Aorta (tissue), 5 donors: ENCODE measurements at regions of chr10 and their contacts with region 1.

Region 1: GRCh38 chr10:32256613-32257437 is 90.1 kb downstream of the EPC1 start:
- DNase-seq: no peak
- ATAC-seq: peak; percentile 84
- H3K4me3 ChIP-seq: no peak overlapping the region
- H3K27ac ChIP-seq: no peak overlapping the region
- H3K4me1 ChIP-seq: no peaks in the 10 kb centered on the region
- H3K27me3 ChIP-seq: no peaks in the 10 kb centered on the region

Region 2: DNA sequence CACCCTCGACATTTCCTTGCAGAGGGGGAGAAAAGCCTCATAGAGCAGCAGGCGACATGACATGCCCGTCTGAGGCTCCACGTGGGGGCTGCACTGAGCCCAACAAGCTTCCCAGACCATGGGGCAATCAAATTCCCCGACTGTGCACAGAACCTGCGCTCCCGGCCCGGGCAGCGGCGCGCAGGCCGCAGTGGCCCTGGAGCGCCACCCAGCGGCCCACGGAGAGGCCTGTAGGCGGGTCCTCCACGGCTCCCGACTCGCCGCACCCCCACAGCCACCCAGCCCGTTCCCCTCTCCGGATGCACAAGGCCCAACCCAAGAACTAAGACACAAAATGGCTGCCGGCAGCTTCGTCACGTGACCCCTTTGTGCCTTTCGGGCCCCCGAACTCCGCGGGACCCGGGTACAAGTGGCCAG is 89.3 kb after region 1 on chr10:
- intact Hi-C with region 1: loop called (anchors 2 to 5 kb)
- DNase-seq: peak; percentile 97 to 98
- ATAC-seq: peak; percentile 99
- H3K4me3 ChIP-seq: peak overlapping the region; percentile 76 to 90
- H3K27ac ChIP-seq: peak overlapping the region; percentile 89 to 99
- H3K4me1 ChIP-seq: no peaks in the 10 kb centered on the region
- H3K27me3 ChIP-seq: no peaks in the 10 kb centered on the region

Region 3: DNA sequence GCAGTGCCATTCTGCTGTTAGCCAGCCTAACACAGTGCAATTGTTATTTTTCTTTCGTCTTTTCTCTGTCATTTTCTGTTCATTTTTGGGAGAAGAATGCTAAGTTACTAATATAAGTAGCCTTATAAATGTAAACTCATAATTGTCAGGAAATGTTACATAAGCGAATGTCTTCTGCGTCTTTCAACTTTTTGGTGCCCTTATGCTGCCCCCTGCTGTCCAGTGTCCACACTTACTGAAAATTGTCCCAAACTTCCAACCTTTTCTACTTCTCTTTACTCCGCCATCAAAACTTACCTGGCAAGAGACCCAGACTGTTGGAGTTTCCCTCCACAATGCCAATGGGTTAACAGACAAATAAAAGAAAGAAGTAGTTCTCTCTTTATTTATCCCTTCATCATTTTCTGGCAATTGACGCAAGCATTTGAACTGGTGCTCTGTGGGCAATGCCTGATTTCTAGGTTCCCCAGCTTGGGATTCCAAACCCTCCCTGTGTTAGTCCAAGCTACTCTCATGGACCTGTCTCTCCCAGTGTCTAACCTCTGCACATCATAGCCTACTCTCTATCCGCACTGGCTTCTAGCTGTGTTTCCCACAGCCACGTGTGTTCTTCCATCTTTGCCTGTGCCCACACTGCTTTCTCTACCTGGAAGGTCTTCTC is 111.1 kb after region 1 on chr10:
- intact Hi-C with region 1: loop called (anchors 5 kb)
- DNase-seq: peak; percentile 76 to 79
- ATAC-seq: peak; percentile 79
- H3K4me3 ChIP-seq: no peak overlapping the region
- H3K27ac ChIP-seq: no peak overlapping the region
- H3K4me1 ChIP-seq: peaks cover 0 to 3% of the 10 kb centered on the region in 2 donors
- H3K27me3 ChIP-seq: no peaks in the 10 kb centered on the region